ENCODE measurements at regions of chr13 and their contacts with region 1.

Region 1: GRCh38 chr13:32586080-32586900 is at the start of gene PDS5B:
- DNase-seq: peak; percentile 96
- ATAC-seq: peak; percentile 93
- H3K4me3 Mint-ChIP-seq: peak within 1 kb of the TSS; percentile 92
- H3K27ac Mint-ChIP-seq: peak within 1 kb of the TSS; percentile 93
- H3K4me1 Mint-ChIP-seq: peaks cover 36% of the 10 kb centered on the region
- H3K27me3 Mint-ChIP-seq: peaks cover 3% of the 10 kb centered on the region
- total RNA-seq, gene PDS5B: 51.3 to 75.7 TPM

Region 2: GRCh38 chr13:32381539-32381938 is 204.8 kb before region 1 on chr13:
- CTCF ChIA-PET with region 1: no interaction called
- POLR2A ChIA-PET with region 1: no interaction called
- intact Hi-C with region 1: loop called (anchors 1 to 2 kb)
- DNase-seq: no peak
- ATAC-seq: peak; percentile 30
- H3K4me3 Mint-ChIP-seq: no peak overlapping the region
- H3K27ac Mint-ChIP-seq: no peak overlapping the region
- H3K4me1 Mint-ChIP-seq: no peaks in the 10 kb centered on the region
- H3K27me3 Mint-ChIP-seq: no peaks in the 10 kb centered on the region

Region 3: GRCh38 chr13:32639502-32640105 is 53.3 kb after region 1 on chr13:
- CTCF ChIA-PET with region 1: interaction called, 25 read pairs
- POLR2A ChIA-PET with region 1: no interaction called
- intact Hi-C with region 1: loop called (anchors 1 kb)
- DNase-seq: peak; percentile 66
- ATAC-seq: peak; percentile 69
- H3K4me3 Mint-ChIP-seq: no peak overlapping the region
- H3K27ac Mint-ChIP-seq: no peak overlapping the region
- H3K4me1 Mint-ChIP-seq: peaks cover 40% of the 10 kb centered on the region
- H3K27me3 Mint-ChIP-seq: no peaks in the 10 kb centered on the region

Region 4: DNA sequence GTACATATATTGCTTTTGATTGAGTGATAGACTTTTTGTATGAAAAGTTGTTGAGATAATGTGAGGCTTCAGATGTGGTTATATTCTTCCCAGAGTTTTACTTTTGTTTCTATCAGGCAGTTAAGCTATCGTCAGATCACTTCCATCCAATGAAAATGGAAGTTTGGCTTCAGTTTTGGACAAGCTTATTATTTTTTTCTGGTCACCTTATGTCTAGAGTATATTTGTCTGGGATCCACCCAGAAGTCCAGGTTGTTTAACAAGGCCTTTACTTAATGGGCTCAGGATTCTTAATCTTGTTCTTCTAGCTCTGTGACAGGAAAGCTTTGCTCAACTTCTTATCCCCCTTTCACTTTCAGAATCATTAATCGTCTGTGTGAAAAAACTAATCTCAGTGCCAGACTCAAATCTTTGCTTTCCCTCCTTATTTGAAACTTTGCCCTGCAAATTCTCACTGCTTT is 150.9 kb after region 1 on chr13:
- CTCF ChIA-PET with region 1: interaction called, 3 read pairs
- POLR2A ChIA-PET with region 1: no interaction called
- intact Hi-C with region 1: loop called (anchors 1 to 2 kb)
- DNase-seq: no peak
- ATAC-seq: peak; percentile 73
- H3K4me3 Mint-ChIP-seq: peak overlapping the region; percentile 69
- H3K27ac Mint-ChIP-seq: peak overlapping the region; percentile 92
- H3K4me1 Mint-ChIP-seq: peaks cover 27% of the 10 kb centered on the region
- H3K27me3 Mint-ChIP-seq: no peaks in the 10 kb centered on the region

Region 5: DNA sequence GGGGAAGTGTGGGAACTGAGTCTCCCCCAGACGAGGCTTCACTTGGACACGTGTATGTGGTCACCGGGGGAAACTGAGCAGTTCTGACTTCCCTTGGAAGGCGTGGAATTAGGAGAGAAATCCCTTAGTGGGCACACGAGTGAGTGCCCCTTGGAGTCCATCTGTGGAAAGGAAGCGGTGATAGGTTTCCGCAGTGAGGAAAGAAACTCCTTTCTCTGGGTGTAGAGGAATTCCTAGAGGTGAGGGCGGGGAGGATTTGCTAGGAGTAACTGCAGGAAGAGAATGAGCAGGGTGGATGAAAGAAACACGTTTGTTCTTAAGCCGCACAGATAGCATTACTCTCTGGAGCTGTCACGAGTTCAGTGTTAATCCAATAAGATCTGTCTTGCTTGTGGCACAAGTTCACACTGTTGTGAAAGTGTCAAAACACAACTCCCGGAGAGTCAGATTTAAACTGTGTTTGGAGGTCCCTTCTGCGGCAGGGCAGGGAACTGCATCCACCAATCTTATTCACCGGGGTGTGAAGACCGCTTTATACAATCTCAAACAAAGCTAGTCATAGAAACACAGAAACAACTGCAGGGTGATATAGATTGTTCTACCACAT is 431.1 kb after region 1 on chr13:
- CTCF ChIA-PET with region 1: no interaction called
- POLR2A ChIA-PET with region 1: no interaction called
- intact Hi-C with region 1: loop called (anchors 1 to 5 kb)
- DNase-seq: peak; percentile 74
- ATAC-seq: peak; percentile 98
- H3K4me3 Mint-ChIP-seq: peak overlapping the region; percentile 52
- H3K27ac Mint-ChIP-seq: no peak overlapping the region
- H3K4me1 Mint-ChIP-seq: peaks cover 9% of the 10 kb centered on the region
- H3K27me3 Mint-ChIP-seq: peaks cover 56% of the 10 kb centered on the region

Region 6: DNA sequence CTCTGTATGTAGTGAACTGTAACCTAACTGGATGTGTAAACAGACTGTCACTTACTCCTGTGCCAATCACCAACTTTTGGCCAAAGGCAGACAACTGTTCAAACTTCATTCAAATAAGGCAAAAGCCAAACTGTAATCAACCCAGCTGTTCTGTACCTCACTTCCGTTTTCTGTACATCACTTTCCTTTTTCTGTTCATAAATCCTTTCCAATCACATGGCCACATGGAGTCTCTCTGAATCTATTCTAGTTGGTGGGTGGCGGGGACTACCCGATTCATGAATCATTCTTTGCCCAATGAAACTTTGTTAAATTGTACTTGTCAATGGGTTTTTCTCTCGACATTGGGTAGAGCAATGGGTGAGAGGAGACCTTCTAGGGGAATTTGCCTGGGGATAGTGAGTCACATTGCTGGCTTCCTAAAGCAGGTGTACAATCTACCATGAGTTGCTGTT is 1053.4 kb after region 1 on chr13:
- CTCF ChIA-PET with region 1: no interaction called
- POLR2A ChIA-PET with region 1: no interaction called
- intact Hi-C with region 1: loop called in 1 of 2 experiments (anchors 1 kb)
- DNase-seq: peak; percentile 79
- ATAC-seq: peak; percentile 89
- H3K4me3 Mint-ChIP-seq: no peak overlapping the region
- H3K27ac Mint-ChIP-seq: peak overlapping the region; percentile 88
- H3K4me1 Mint-ChIP-seq: peaks cover 50% of the 10 kb centered on the region
- H3K27me3 Mint-ChIP-seq: peaks cover under 1% of the 10 kb centered on the region

Measured in activated CD4-positive, alpha-beta T cell treated with anti-CD3 and anti-CD28 coated beads for 36 hours (primary cell).